Cardiac septum (tissue), 1 donor: ENCODE measurements at regions of chr21 and their contacts with region 1.

Region 1: DNA sequence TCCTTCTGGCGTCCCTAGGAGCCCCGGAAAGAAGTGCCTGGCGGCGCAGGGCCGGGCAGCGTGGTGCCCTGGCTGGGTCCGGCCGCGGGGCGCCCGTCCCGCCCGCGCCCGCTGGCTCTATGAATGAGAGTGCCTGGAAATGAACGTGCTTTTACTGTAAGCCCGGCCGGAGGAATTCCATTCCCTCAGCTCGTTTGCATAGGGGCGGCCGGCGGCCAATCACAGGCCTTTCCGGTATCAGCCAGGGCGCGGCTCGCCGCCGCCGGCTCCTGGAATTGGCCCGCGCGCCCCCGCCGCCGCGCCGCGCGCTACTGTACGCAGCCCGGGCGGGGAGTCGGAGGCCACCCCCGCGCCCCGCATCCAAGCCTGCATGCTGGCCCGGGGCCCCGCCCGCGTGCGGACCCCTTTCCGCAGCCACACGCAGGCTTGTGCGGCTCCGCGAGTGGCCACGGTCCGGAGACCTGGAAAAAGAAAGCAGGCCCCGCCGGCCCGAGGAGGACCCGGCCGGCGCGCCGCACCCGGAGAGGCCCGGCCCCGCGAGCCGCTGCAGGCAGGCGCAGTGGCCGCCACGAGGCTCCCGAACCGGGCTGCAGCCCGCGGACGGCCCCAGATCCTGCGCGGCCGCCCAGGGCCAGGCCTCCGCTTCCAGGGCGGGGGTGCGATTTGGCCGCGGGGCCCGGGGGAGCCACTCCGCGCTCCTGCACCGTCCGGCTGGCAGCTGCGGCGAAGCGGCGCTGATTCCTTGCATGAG is 160.4 kb downstream of the RUNX1 start:
- DNase-seq: peak; percentile 96

Region 2: DNA sequence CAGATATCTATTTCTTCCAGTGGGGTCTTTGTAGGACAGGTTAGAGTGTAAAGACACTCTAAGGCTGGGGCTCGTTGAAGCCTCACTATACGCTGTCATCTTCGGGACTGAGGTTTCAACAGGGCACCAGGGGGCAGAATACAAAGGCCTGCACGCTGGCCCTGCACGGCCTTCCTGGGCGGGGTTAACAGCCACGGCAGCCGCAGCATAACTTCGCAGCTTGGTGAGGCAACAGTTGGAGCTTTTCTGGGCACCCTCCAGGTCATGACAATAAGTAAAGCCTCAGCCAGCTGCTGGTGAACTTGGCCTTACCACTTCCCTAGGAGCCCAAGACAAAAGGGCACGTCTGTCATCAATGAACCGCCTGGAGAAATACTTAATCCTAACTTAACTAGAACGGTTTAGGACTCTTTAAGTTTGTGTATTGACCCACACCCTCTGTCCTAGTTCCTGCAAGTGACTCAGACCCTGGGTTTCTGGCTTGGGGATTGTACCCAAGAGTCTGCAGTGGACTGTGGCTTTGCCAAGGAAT is 162.6 kb after region 1 on chr21:
- intact Hi-C with region 1: loop called (anchors 5 kb)
- DNase-seq: peak; percentile 93

Region 3: GRCh38 chr21:35256467-35256988 is 367.8 kb after region 1 on chr21:
- intact Hi-C with region 1: loop called (anchors 5 kb)
- DNase-seq: peak; percentile 87

Region 4: DNA sequence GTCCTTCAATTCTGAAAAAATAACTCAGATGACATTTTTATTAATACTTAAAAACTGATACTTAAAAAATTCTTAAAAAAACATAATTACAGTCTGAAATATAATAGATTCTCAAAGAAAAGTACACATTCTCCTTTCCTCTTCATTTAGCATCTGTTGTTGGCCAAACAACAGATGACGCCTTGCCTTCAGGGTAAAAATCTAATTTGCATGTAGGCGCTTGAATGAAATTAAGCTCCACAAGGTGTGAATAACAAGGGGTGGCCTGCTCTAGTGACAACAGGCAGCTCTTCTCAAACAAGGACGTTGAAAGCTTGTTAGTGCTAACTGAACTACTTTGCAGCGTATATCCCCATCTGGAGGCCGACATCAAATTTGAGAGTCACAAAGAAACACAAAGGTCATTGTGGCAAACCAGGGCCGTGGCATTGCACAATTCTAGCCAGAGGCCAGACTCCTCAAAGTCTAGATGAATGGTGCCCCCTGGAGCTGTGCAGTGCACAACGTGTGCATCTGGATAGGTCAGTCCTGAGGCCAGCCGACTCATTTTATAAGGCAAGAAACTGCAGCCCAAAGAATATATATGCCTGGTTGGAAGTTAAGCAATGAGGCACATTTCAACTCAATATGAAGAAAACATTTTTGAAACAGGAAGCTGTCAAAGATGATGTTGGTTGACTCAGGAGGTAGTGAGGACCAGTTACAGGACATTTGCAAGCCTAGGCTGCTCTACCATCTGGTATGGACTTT is 619.6 kb after region 1 on chr21:
- intact Hi-C with region 1: loop called (anchors 10 kb)
- DNase-seq: peak; percentile 84

Region 5: DNA sequence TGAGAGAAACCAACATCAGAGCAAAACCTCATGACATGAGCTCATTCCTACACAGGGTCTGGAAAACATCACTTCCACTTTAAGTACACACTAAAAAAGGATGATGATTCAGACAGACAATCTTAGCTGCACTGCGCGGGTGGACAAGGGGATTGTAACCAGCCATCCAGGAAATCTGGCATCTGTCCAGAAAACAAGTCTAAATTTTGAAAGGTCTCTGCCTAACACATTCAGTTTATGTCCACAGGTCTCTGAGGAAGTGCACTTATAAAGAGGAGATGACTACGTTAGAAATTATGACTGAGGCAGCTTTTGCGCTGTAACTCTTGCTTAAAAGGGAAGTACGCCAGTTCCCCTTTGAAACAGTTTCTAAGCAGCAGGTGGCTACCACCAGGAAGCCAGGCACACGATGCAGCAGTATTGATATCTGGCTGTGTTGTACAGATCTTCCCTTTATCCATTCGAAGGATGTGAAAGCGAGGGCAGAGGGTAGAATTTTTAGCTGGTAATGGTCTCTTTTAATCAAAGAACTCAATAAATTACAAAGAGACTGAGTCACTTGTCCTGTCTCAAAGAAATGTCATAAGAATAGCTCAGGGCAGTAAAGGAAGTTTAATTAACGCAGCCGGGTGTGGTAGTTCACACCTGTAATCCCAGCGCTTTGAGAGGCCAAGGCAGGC is 1043.6 kb after region 1 on chr21:
- intact Hi-C with region 1: loop called (anchors 10 kb)
- DNase-seq: no peak